Activated T-helper 2 cell treated with anti-CD3 and anti-CD28 coated beads, Interferon-gamma antibody, Interleukin-2, Interleukin-4, amounts not matched to agents 10 μg/mL and 5 μg/mL and 100 μg/mL, durations not matched to agents 14 hours and 24 hours and 36 hours (primary cell): ENCODE measurements at regions of chr13 and their contacts with region 1.

Region 1: GRCh38 chr13:19959831-19960652 is 1.5 kb downstream of the ZMYM2 start:
- DNase-seq: peak; percentile 79
- H3K4me3 Mint-ChIP-seq: peak overlapping the region; percentile 95
- H3K27ac Mint-ChIP-seq: peak overlapping the region; percentile 98
- H3K4me1 Mint-ChIP-seq: peaks cover 28% of the 10 kb centered on the region
- H3K27me3 Mint-ChIP-seq: peaks cover 3% of the 10 kb centered on the region

Region 2: GRCh38 chr13:19633479-19634255 is 326.4 kb before region 1 on chr13 and contains the start of gene MPHOSPH8:
- intact Hi-C with region 1: loop called (anchors 1 kb)
- DNase-seq: peak; percentile 91
- H3K4me3 Mint-ChIP-seq: peak within 1 kb of the TSS; percentile 99
- H3K27ac Mint-ChIP-seq: peak within 1 kb of the TSS; percentile 98
- H3K4me1 Mint-ChIP-seq: peaks cover 19% of the 10 kb centered on the region
- H3K27me3 Mint-ChIP-seq: no peaks in the 10 kb centered on the region
- total RNA-seq, gene MPHOSPH8: 43.5 and 46.4 TPM in 2 replicates

Region 3: DNA sequence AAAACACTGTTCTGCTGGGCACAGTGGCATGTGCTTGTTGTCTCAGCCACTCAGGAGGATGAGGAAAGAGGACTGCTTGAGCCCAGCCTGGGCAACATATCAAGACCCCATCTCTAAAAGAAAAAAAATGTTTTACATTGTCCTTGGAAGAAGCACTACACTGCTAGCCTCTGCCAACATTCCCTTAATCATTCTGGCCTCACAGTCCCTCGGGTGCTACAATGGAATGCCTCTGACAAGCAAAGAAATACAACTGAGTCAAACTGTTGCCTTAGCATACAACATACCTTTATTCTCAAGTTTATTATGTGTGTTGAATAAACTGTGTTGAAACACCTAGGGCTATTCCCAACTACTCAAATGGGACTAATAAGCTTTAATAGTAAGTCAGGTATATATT is 233.4 kb before region 1 on chr13:
- intact Hi-C with region 1: no loop called
- DNase-seq: no peak
- H3K4me3 Mint-ChIP-seq: no peak overlapping the region
- H3K27ac Mint-ChIP-seq: no peak overlapping the region
- H3K4me1 Mint-ChIP-seq: peaks cover 6% of the 10 kb centered on the region
- H3K27me3 Mint-ChIP-seq: no peaks in the 10 kb centered on the region

Region 4: GRCh38 chr13:19845758-19846157 is 114.3 kb before region 1 on chr13:
- intact Hi-C with region 1: loop called (anchors 5 kb)
- DNase-seq: no peak
- H3K4me3 Mint-ChIP-seq: no peak overlapping the region
- H3K27ac Mint-ChIP-seq: peak overlapping the region; percentile 39
- H3K4me1 Mint-ChIP-seq: peaks cover 17% of the 10 kb centered on the region
- H3K27me3 Mint-ChIP-seq: no peaks in the 10 kb centered on the region

Region 5: DNA sequence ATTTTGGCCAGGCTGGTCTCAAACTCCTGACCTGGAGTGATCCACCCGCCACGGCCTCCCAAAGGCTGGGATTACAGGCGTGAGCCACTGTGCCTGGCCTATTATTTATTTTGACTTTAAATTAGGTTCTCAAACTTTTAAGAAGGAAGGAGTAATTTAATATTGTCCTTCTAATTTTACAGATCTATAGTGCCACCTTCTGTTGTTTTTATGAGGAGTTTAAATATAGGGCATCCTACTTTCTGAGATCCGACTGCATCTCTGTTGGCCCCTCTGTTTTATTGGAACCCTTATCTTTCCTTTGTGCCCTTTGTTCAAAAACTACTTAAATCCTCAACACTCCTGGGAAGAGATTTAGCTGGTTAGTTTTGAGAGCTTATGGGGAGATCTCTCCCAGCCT is 71.2 kb before region 1 on chr13:
- intact Hi-C with region 1: no loop called
- DNase-seq: no peak
- H3K4me3 Mint-ChIP-seq: no peak overlapping the region
- H3K27ac Mint-ChIP-seq: no peak overlapping the region
- H3K4me1 Mint-ChIP-seq: no peaks in the 10 kb centered on the region
- H3K27me3 Mint-ChIP-seq: peaks cover 3% of the 10 kb centered on the region

Region 6: DNA sequence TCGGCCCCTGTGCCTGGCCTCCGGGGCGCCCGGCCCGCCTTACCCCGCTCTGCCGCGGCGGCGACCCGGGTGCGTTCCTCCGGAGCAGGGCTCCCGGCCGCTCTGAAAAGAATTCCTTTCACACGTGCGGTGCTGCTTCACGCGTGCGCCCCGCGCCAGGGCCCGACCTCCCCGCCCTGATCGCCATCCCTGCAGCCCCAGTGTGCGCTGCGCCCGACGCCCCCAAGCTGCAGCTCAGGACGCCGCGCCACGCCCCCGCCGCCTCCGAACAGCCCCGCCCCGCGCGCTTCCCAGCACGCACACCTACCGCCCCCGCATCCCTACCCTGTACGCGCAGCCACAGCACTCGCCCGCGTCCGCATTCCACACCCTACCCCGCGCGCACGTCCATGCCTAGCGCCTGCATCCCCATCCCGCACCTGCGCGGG is 200.8 kb after region 1 on chr13 and contains the start of gene GJA3:
- intact Hi-C with region 1: loop called (anchors 1 kb)
- DNase-seq: peak; percentile 40
- H3K4me3 Mint-ChIP-seq: peak within 1 kb of the TSS; percentile 84
- H3K27ac Mint-ChIP-seq: peak within 1 kb of the TSS; percentile 28
- H3K4me1 Mint-ChIP-seq: peaks cover 13% of the 10 kb centered on the region
- H3K27me3 Mint-ChIP-seq: peaks cover 59% of the 10 kb centered on the region
- total RNA-seq, gene GJA3: 0.05 and 0.07 TPM in 2 replicates

Region 7: GRCh38 chr13:20902438-20903163 is 942.6 kb after region 1 on chr13 and contains the start of gene XPO4:
- intact Hi-C with region 1: loop called (anchors 5 kb)
- DNase-seq: peak; percentile 81
- H3K4me3 Mint-ChIP-seq: peak within 1 kb of the TSS; percentile 96
- H3K27ac Mint-ChIP-seq: peak within 1 kb of the TSS; percentile 96
- H3K4me1 Mint-ChIP-seq: peaks cover 25% of the 10 kb centered on the region
- H3K27me3 Mint-ChIP-seq: no peaks in the 10 kb centered on the region
- total RNA-seq, gene XPO4: 25.5 and 28.0 TPM in 2 replicates